Psoas muscle (tissue), 8 donors: ENCODE measurements at regions of chr13 and their contacts with region 1.

Region 1: GRCh38 chr13:25394402-25395060 is 22.8 kb downstream of the ATP8A2 start:
- DNase-seq: no peak
- ATAC-seq: no peak
- H3K4me3 ChIP-seq: no peak overlapping the region
- H3K27ac ChIP-seq: no peak overlapping the region
- H3K4me1 ChIP-seq: no peaks in the 10 kb centered on the region
- H3K27me3 ChIP-seq: peaks cover 0 to 3% (median 0%) of the 10 kb centered on the region in 3 donors
- CTCF ChIP-seq: no peak

Region 2: GRCh38 chr13:25179832-25180774 is 214.4 kb before region 1 on chr13:
- intact Hi-C with region 1: loop called in 1 of 2 experiments (anchors 5 kb)
- DNase-seq: no peak
- ATAC-seq: no peak
- H3K4me3 ChIP-seq: no peak overlapping the region
- H3K27ac ChIP-seq: no peak overlapping the region
- H3K4me1 ChIP-seq: no peaks in the 10 kb centered on the region
- H3K27me3 ChIP-seq: peaks cover 0 to 7% (median 3%) of the 10 kb centered on the region in 3 donors
- CTCF ChIP-seq: no peak